ENCODE measurements at regions of chr1 and their contacts with region 1.

Region 1: DNA sequence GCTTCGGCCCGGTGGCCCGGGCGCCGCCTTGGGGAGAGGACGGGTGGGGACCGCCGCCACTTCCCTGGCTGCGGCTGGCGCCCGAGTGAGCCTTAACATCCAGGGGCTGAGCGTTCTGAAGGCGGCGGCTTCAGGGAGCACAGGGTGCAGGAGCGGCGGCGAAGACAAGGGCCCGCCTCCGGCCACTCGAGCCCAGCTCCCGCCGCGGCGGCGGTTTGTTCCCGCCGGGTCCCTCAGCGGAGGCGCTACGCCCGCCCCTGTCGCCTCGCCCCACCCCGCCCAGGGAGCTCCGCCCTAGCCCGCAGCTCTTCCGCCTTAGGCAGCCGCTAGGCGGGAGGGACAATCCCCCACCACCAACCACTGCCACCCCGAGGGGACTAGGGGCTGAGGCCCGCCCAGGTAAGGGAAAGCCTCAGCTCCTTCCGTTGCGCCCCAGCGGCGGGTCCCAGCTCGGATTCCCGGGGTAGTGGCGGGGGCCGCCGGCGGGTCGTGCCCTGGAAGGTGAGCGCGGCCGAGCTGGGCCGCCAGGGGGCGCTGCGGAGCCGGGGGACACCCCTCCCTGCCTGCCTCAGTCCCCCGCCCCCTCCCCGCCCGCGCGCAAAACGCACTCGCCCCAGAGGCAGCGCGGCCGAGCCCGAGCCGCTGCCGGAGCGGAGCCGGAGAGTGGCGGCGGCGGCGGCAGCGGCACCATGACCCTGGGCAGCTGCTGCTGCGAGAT is at the start of gene FOXD2:
- DNase-seq: peak; percentile 91
- H3K4me3 Mint-ChIP-seq: peak within 1 kb of the TSS; percentile 93
- H3K27ac Mint-ChIP-seq: peak within 1 kb of the TSS; percentile 85
- H3K4me1 Mint-ChIP-seq: peaks cover 31% of the 10 kb centered on the region
- H3K27me3 Mint-ChIP-seq: peaks cover 3% of the 10 kb centered on the region
- total RNA-seq, gene FOXD2: 0.65 to 0.68 TPM

Region 2: GRCh38 chr1:47232187-47232874 is 205.3 kb before region 1 on chr1 and contains the start of gene TAL1:
- CTCF ChIA-PET with region 1: interaction called, 10 read pairs
- POLR2A ChIA-PET with region 1: no interaction called
- DNase-seq: no peak
- H3K4me3 Mint-ChIP-seq: peak within 1 kb of the TSS; percentile 60
- H3K27ac Mint-ChIP-seq: peak within 1 kb of the TSS; percentile 52
- H3K4me1 Mint-ChIP-seq: peaks cover 40% of the 10 kb centered on the region
- H3K27me3 Mint-ChIP-seq: peaks cover 80% of the 10 kb centered on the region
- total RNA-seq, gene TAL1: not detected

Region 3: GRCh38 chr1:47313915-47314664 is 123.5 kb before region 1 on chr1 and contains the start of gene STIL:
- CTCF ChIA-PET with region 1: interaction called, 10 read pairs
- POLR2A ChIA-PET with region 1: interaction called, 19 read pairs
- DNase-seq: peak; percentile 99
- H3K4me3 Mint-ChIP-seq: peak within 1 kb of the TSS; percentile 94
- H3K27ac Mint-ChIP-seq: peak within 1 kb of the TSS; percentile 94
- H3K4me1 Mint-ChIP-seq: peaks cover 33% of the 10 kb centered on the region
- H3K27me3 Mint-ChIP-seq: no peaks in the 10 kb centered on the region
- total RNA-seq, gene STIL: 40.4 to 40.8 TPM

Region 4: DNA sequence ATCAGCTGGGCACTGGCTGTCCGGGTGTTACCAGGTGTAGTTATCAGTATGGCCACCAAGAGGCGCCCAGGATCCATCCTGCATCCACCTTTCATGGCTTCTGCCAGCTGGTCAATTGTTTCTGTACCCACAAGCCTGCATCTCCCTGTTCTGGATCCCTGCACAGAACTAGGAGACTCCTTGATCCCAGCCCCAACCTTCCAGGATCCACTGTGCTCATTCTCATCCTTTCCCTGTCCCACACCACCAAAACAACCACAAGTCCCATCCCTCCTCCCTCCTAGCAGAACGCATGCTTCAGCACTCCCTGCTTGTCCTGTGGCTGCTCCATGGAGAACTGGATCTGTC is 48.7 kb before region 1 on chr1:
- CTCF ChIA-PET with region 1: interaction called, 12 read pairs
- POLR2A ChIA-PET with region 1: no interaction called
- DNase-seq: peak; percentile 60
- H3K4me3 Mint-ChIP-seq: no peak overlapping the region
- H3K27ac Mint-ChIP-seq: no peak overlapping the region
- H3K4me1 Mint-ChIP-seq: no peaks in the 10 kb centered on the region
- H3K27me3 Mint-ChIP-seq: peaks cover 2% of the 10 kb centered on the region

Region 5: GRCh38 chr1:47424336-47424982 is 13.1 kb before region 1 on chr1:
- CTCF ChIA-PET with region 1: interaction called, 32 read pairs
- POLR2A ChIA-PET with region 1: no interaction called
- DNase-seq: no peak
- H3K4me3 Mint-ChIP-seq: no peak overlapping the region
- H3K27ac Mint-ChIP-seq: no peak overlapping the region
- H3K4me1 Mint-ChIP-seq: no peaks in the 10 kb centered on the region
- H3K27me3 Mint-ChIP-seq: no peaks in the 10 kb centered on the region

Region 6: GRCh38 chr1:47710329-47711071 is 272.9 kb after region 1 on chr1:
- CTCF ChIA-PET with region 1: interaction called, 91 read pairs
- POLR2A ChIA-PET with region 1: interaction called, 4 read pairs
- DNase-seq: peak; percentile 69
- H3K4me3 Mint-ChIP-seq: no peak overlapping the region
- H3K27ac Mint-ChIP-seq: peak overlapping the region; percentile 16
- H3K4me1 Mint-ChIP-seq: peaks cover 3% of the 10 kb centered on the region
- H3K27me3 Mint-ChIP-seq: peaks cover 71% of the 10 kb centered on the region

Measured in activated CD4-positive, alpha-beta memory T cell treated with anti-CD3 and anti-CD28 coated beads, Interleukin-2, amount 10 ng/mL, durations not matched to agents 7 days and 5 days (primary cell).